IMR-90 (cell line): ENCODE measurements at regions of chr1 and their contacts with region 1.

Region 1: GRCh38 chr1:52947490-52947889 is 20.4 kb downstream of the SCP2 start:
- DNase-seq: no peak
- ATAC-seq: no peak
- H3K4me3 ChIP-seq: no peak overlapping the region
- H3K27ac ChIP-seq: no peak overlapping the region
- H3K4me1 ChIP-seq: no peaks in the 10 kb centered on the region
- H3K27me3 ChIP-seq: no peaks in the 10 kb centered on the region
- CTCF ChIP-seq: no peak
- POLR2A ChIP-seq: no peak
- RAD21 ChIP-seq: no peak

Region 2: DNA sequence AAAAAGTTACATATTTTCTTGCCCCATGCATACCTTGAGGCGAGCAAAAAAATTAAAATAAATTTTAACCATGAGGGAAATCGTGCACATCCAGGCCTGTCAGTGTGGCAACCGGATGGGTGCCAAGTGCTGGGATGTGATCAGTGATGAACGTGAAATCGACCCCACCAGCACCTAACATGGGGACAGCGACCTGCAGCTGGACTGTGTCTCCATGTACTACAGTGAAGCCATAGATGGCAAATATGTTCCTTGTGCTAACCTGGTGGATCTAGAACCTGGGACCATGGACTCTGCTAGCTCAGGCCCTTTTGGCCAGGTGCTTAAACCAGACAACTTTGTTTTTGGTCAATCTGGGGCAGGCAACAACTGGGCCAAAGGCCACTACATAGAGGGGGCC is 47.2 kb after region 1 on chr1:
- CTCF ChIA-PET with region 1: no interaction called
- POLR2A ChIA-PET with region 1: no interaction called
- dilution Hi-C with region 1: no loop called
- in situ Hi-C with region 1: no loop called
- intact Hi-C with region 1: loop called (anchors 5 kb)
- DNase-seq: no peak
- ATAC-seq: no peak
- H3K4me3 ChIP-seq: no peak overlapping the region
- H3K27ac ChIP-seq: no peak overlapping the region
- H3K4me1 ChIP-seq: peaks cover 2% of the 10 kb centered on the region; the same call in 1 of the 2 replicates
- H3K27me3 ChIP-seq: no peaks in the 10 kb centered on the region
- CTCF ChIP-seq: no peak
- POLR2A ChIP-seq: no peak
- RAD21 ChIP-seq: no peak